Prostate gland (tissue), 2 donors: ENCODE measurements at regions of chr16 and their contacts with region 1.

Region 1: DNA sequence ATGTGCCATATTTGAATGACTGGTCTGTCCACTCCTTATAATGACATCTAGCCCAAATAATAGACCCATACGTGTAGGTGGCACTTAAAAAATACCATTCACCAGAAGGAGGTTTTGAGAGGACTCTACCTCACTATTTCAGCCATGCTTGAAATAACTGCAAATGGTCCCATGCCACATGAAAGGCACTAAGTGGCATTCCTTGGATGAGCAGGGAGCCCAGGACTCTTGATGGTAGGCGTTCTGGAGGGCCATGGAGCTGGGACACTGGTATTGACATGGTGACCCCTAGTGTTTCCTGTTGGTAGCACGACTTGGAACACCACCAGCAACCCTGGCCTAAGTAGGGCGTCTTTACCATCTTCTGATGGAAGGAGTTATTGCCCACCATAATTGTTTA is 148.7 kb upstream of the ZFHX3 start:
- DNase-seq: peak; percentile 73
- H3K4me3 ChIP-seq: no peak overlapping the region
- H3K27ac ChIP-seq: no peak overlapping the region
- H3K4me1 ChIP-seq: no peaks in the 10 kb centered on the region
- H3K27me3 ChIP-seq: no peaks in the 10 kb centered on the region
- CTCF ChIP-seq: peak in 3 of 4 experiments; percentile 49 to 68 (median 66)
- POLR2A ChIP-seq: no peak

Region 2: GRCh38 chr16:72501739-72502593 is 694.7 kb before region 1 on chr16:
- intact Hi-C with region 1: loop called (anchors 10 kb)
- DNase-seq: peak; percentile 34
- H3K4me3 ChIP-seq: no peak overlapping the region
- H3K27ac ChIP-seq: no peak overlapping the region
- H3K4me1 ChIP-seq: no peaks in the 10 kb centered on the region
- H3K27me3 ChIP-seq: no peaks in the 10 kb centered on the region
- CTCF ChIP-seq: peak in 3 of 4 experiments; percentile 57 to 67 (median 63)
- POLR2A ChIP-seq: no peak

Region 3: DNA sequence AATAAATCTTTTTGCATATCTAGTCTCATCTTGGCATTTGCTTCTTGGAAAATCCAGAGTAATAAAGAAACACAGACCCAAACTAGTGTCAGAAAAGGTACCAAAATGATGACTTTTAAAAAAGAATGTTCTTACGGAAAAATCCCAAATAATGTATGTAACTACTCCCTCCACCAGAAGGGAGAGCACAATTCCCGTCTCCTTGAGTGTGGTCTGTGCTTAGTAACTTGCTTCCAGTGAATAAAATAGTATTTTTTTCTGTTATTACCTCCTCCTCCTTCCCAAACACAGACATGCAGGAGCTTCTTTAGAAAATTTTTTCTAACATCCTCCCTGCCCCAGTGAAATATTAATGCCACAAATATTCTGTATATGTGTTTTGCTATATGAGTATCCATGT is 506.8 kb before region 1 on chr16:
- intact Hi-C with region 1: loop called (anchors 10 kb)
- DNase-seq: no peak
- H3K4me3 ChIP-seq: no peak overlapping the region
- H3K27ac ChIP-seq: no peak overlapping the region
- H3K4me1 ChIP-seq: no peaks in the 10 kb centered on the region
- H3K27me3 ChIP-seq: no peaks in the 10 kb centered on the region
- CTCF ChIP-seq: no peak
- POLR2A ChIP-seq: no peak

Region 4: DNA sequence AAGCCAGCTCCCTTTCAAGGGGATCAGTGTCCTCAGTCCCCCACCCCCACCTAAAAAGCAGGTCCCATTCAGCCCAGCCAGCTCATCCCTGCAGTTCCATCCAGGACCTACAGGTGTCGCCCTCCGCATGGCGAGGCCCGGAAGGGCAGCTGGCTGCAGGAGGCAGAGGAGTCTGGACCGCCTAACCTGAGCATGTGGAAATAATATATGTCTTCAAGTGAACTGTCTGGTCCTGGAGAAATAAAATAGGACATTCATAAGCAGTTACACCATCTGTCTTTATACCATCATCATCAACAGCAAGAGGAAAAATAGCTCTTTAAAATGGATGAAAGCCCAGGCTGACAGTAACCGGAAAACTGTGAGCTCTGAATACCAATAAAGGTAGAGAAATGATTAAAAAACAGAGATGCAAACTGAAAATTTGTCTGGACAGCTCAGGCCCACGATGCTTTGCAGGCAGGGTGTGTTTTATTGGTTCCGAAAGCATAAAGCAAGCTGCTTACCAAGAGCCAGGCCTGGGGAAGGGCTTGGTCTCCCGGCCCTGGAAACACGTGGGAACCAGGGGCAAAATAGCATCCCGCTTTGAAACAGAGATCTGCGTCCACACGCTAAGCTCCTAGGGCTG is 363.9 kb before region 1 on chr16:
- intact Hi-C with region 1: loop called (anchors 5 kb)
- DNase-seq: peak; percentile 79
- H3K4me3 ChIP-seq: no peak overlapping the region
- H3K27ac ChIP-seq: peak overlapping the region; percentile 21 to 34
- H3K4me1 ChIP-seq: peaks cover 6% of the 10 kb centered on the region
- H3K27me3 ChIP-seq: no peaks in the 10 kb centered on the region
- CTCF ChIP-seq: peak; percentile 95 to 97 (median 96)
- POLR2A ChIP-seq: no peak

Region 5: GRCh38 chr16:73233846-73234424 is 37.3 kb after region 1 on chr16:
- intact Hi-C with region 1: no loop called
- DNase-seq: no peak
- H3K4me3 ChIP-seq: no peak overlapping the region
- H3K27ac ChIP-seq: no peak overlapping the region
- H3K4me1 ChIP-seq: no peaks in the 10 kb centered on the region
- H3K27me3 ChIP-seq: no peaks in the 10 kb centered on the region
- CTCF ChIP-seq: no peak
- POLR2A ChIP-seq: no peak